Cardiac septum (tissue), 1 donor: ENCODE measurements at regions of chr9 and their contacts with region 1.

Region 1: DNA sequence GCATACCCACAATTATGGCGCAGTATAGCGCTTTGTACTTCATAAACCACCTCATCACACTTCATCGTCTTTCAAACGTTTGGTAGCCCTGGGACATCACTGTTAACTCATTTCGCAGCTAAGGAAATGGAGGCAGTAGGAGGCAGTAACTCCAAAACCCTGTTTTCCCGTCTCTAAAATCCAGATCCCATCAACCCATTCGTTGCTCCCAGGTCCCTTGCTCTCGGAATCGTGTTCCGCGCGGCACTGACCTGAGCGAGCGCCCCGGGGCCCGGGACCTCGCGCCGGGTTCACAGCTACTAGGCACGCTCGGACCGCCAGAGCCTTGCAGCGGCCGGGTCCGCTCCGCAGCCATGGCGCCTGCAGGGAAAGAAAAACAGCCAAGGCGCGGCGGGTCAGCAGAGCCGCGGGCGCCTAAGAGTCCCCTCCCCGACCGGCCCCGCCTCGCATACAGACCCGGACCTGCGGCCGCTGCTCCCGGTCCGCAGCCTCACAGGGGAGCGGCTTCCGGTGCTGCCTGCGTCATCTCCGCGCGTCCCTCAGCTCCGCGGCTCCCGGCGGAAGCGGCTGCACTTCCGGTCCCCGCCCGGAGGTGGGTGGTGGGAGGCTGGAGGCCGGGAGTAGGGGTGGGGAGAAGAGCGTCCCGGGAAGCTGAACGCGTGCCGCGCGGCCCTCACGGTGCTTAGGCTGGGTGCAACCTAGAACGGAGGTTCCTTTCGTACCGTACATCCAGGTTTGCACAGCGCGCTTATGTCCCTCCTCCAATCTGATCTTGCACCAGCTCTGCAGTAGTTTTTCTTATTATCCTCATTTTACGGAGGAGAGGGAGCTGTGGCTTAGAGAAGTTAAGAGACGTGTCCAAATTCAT is at the start of gene FBXW2:
- DNase-seq: peak; percentile 97
- total RNA-seq, gene FBXW2: 46.2 TPM

Region 2: DNA sequence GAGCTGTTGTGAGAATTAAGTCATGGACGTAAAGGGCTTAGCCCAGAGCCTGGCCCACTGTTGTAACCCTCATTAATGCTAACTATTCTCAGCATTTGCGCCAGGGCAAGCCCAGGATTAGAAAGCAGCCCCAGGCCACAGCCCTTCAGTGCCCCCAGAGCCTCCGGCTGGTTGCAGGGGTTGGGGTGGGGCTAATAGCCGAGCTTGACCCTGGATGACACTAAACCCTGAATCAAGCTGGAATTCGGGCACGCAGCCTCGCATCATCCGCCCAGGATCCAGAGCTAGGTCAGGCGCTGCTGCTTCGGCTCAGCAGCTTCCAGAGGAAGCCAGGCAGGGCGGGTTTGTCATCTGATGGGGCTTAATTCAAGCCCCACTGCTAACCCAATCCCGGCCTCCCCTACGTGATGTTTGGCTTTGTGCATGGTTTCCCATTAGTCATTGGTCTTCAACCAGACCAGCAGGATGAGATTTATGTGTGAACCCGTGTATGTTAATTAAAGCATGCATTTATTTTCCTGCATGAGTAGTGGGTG is 77.7 kb before region 1 on chr9:
- intact Hi-C with region 1: loop called (anchors 5 kb)
- DNase-seq: no peak